ENCODE measurements at regions of chr17 and their contacts with region 1.

Region 1: GRCh38 chr17:74659898-74660297 is 36.4 kb upstream of the CD300E start:
- DNase-seq: no peak
- H3K4me3 ChIP-seq: no peak overlapping the region
- H3K27ac ChIP-seq: no peak overlapping the region
- H3K4me1 ChIP-seq: peaks cover 7 to 11% of the 10 kb centered on the region in 2 donors
- H3K27me3 ChIP-seq: no peaks in the 10 kb centered on the region
- CTCF ChIP-seq: no peak
- POLR2A ChIP-seq: no peak

Region 2: GRCh38 chr17:74736513-74737298 is 76.8 kb after region 1 on chr17 and contains the start of gene RAB37:
- intact Hi-C with region 1: loop called (anchors 5 kb)
- DNase-seq: no peak
- H3K4me3 ChIP-seq: no peak within 1 kb of the TSS
- H3K27ac ChIP-seq: no peak within 1 kb of the TSS
- H3K4me1 ChIP-seq: peaks cover 15 to 24% of the 10 kb centered on the region in 2 donors
- H3K27me3 ChIP-seq: peaks cover 24% of the 10 kb centered on the region
- CTCF ChIP-seq: peak in 4 of 6 experiments; percentile 9 to 54 (median 47)
- POLR2A ChIP-seq: no peak
- total RNA-seq, gene RAB37: 0.33 to 1.8 (median 0.39) TPM